Dorsolateral prefrontal cortex (tissue), 120 donors: ENCODE measurements at regions of chr7 and their contacts with region 1.

Region 1: GRCh38 chr7:25389489-25390106 is 161.3 kb upstream of the NPVF start:
- DNase-seq: peak in 1 of 10 donors; percentile 56
- H3K4me3 ChIP-seq: no peak overlapping the region
- H3K27ac ChIP-seq: no peak overlapping the region
- H3K27me3 ChIP-seq: no peaks in the 10 kb centered on the region
- CTCF ChIP-seq: peak; percentile 60 to 94 (median 79)

Region 2: DNA sequence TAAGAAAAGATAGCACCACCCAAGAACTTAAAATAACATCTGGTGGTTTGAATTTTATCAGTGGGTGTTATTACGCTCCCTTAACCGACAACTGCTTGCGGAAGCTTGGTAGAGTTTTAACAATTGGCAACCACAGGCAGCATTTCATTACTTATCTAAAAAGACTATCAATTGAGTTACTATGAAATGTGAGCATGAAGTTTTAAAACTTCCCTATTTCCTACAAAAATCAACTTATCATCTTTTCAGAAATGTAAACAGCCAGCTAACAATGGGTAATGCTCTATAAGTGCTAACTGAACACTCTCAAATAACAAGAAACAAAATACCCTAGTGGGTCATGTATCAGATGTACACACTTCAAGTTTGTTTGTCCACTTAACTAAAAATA is 478.4 kb before region 1 on chr7:
- intact Hi-C with region 1: no loop called
- DNase-seq: no peak
- H3K4me3 ChIP-seq: no peak overlapping the region
- H3K27ac ChIP-seq: peak overlapping the region in 1 of 59 donors; percentile 37
- H3K27me3 ChIP-seq: no peaks in the 10 kb centered on the region
- CTCF ChIP-seq: no peak

Region 3: DNA sequence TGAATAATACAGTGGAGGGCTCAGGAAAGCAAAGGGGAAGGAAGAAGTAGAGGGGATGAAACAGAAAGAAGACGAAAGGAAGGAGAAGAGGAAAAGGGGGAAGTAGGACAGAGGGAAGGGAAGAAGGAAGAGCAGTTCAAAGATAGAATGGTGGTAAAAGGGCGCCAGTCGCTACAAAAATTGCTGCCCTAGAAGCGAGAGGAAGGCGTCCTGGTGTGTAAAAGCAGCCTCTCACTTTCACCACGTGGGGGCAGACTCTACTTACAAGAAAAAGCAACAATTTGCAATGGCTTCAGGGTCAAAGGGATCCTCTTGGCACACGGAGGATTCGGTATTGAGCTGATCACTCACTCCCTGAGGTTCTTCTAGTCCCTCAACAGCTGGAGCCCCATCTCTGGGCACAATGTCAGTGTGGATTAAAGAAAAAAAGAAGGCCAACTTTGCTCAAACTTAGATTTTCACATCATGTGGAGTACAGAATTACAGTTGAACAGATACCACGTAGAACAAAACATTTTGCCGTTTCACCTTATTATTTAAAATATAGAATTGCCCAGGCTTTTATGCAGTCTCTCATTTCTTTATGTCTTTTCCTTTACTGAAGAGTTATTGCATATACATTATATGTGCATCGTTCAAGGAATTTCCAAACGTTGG is 129.9 kb before region 1 on chr7:
- intact Hi-C with region 1: loop called (anchors 1 kb)
- DNase-seq: peak in 8 of 10 donors; percentile 23 to 81 (median 63)
- H3K4me3 ChIP-seq: peak overlapping the region in 2 of 59 donors; percentile 12 to 15
- H3K27ac ChIP-seq: peak overlapping the region in 5 of 59 donors; percentile 15 to 58 (median 26)
- H3K27me3 ChIP-seq: peaks cover 0 to 4% (median 0%) of the 10 kb centered on the region in 45 donors
- CTCF ChIP-seq: peak; percentile 78 to 99 (median 93)

Region 4: DNA sequence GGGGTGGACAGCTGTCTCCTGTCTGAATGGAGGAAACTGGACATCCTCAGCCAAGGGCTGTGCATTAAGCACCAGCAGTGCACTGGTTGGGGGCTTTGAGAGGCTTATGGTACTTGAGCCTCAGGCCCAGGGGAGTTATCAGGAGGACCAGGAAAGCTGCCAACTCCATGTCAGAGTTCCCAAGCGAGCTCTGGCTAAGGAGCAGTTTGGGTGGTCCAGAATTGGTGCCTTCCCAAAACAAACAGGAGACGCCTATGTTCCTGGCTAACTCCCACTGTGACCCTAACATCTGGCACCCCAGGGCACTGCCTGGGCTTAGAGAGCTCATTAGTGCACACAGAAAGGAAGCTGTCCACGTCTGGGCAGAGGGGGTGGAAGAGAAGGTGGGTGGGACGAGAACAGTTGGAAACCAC is 247.3 kb after region 1 on chr7:
- intact Hi-C with region 1: no loop called
- DNase-seq: no peak
- H3K4me3 ChIP-seq: no peak overlapping the region
- H3K27ac ChIP-seq: no peak overlapping the region
- H3K27me3 ChIP-seq: peaks cover 0 to 10% (median 0%) of the 10 kb centered on the region in 45 donors
- CTCF ChIP-seq: no peak